ENCODE measurements at regions of chr20 and their contacts with region 1.

Region 1: DNA sequence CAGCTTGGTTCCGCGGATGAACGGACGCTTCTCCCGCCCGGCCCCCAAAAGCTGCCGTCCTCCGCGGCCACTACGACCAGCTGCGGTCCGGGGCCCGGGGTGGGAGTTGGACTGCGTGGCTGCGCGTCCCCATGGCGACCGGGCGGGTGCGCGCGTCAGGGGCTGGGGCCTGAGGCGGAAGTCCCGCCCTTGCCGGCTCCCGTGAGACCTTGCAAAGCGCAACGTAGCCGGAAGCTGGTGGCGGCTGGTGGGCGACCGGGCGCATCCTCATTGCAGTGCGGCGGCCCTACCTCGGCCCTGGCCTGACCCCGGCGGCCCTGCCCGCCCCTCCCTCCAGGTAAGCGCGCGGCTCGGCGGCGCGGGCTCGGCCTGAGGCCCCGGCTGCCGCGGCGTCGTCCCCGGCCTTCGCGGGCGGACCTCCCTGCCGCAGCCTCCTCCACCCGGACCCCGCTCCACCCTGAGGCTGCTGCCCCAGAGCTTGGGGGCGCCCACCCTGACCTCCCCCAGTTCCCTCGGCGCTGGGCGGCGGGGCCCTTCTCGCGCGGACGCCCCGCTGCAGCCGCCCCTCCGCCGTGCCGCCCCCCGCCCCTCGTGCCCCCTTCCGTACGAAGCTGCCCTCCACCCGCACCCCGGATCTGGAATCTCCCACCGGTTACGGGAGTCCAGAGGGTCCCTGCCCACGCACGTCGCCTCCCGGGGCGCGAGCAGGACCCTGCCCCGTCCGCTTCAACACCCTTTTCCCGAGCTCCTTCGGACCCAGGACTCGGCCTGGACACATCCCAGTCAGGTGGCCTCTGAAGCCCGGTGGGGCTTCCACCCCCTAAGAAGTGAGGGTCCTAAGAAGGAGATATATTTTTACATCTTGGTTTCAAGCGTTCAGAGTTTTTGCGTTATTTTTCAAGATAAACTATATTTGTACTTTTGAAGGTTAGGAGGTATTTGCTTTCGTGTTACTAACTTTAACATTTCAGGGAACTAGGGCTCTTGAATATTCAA is at the start of gene ARFGAP1:
- DNase-seq: peak; percentile 94
- ATAC-seq: peak; percentile 99
- H3K4me3 Mint-ChIP-seq: peak within 1 kb of the TSS; percentile 79
- H3K27ac Mint-ChIP-seq: peak within 1 kb of the TSS; percentile 83
- H3K4me1 Mint-ChIP-seq: peaks cover 27% of the 10 kb centered on the region
- H3K27me3 Mint-ChIP-seq: no peaks in the 10 kb centered on the region
- total RNA-seq, gene ARFGAP1: 73.4 to 77.6 TPM

Region 2: DNA sequence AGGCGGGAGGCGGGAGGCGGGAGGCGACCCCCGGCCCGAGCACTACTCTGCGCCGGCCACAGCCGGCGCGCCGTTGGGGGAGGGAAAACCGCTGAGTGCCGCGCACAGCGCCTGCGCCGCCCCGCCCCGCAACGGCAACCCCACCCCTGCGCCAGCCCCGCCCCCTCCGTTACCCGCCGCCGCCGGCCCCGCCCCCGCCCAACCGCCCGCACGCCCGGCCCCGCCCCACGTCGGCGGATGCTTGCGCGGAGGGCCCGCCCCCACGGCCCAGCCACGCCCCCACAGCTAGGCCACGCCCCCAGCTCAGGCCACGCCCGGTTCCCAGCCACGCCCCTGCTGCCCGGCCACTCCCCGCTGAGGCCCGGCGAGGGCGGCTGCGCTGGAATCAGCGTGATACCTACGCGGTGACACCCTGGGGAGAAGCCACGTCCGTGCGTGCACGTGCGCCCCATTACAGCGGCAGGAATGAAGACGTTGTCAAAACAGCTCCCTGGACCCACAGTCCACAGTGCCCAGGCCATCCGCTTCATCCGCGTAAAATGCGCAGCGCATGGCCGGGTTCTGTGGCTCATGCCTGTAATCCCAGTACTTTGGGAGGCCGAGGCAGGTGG is 411.1 kb before region 1 on chr20 and contains the start of gene TCFL5:
- CTCF ChIA-PET with region 1: no interaction called
- POLR2A ChIA-PET with region 1: no interaction called
- intact Hi-C with region 1: loop called in 1 of 2 experiments (anchors 2 kb)
- DNase-seq: peak; percentile 97
- ATAC-seq: peak; percentile 92
- H3K4me3 Mint-ChIP-seq: peak within 1 kb of the TSS; percentile 66
- H3K27ac Mint-ChIP-seq: peak within 1 kb of the TSS; percentile 42
- H3K4me1 Mint-ChIP-seq: peaks cover 28% of the 10 kb centered on the region
- H3K27me3 Mint-ChIP-seq: no peaks in the 10 kb centered on the region
- total RNA-seq, gene TCFL5: 5.2 to 6.6 TPM

Region 3: DNA sequence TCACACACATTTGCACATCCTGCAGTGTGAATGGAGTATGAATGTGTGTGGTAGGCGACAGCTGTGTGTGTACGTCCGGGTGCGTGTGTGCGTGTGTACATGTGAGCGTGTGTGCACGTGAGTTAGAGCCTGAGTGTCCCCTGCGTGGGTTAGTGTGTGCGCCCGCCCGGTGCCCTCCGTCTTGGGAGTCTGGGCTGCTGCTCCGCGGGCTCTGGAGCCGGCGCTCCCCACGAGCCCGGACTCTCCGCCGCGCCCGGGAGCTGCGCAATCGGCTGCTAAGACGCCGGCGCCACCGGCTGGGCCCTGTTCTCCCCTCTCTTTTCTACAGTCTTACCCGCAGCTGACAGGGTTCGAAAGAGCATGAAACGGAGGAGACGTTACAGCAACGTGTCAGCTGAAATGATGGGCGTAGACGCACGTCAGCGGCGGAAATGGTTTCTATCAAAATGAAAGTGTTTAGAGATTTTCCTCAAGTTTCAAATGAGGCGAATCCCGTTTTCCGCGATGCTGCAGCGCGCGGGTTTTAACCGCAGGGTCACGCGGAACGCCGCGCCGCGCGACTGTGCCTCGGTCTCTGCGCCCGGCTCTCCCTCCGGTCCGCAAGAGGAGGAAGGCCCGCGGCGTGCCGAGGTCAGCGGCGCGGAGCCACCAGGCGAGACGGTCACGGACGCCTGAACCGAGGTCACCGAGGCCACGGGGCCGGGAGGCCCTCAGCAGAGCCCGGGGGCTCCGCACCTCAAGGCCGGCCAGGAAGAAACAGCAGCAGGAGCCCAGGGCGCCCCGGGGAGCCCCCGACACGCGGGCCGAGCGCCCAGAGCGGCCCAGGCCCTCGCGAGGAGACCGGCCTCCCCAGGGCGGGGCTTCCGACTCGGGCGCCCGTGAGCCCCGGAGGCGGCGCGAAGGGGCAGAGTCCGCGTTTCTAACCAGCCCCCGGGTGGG is 170.8 kb before region 1 on chr20:
- CTCF ChIA-PET with region 1: no interaction called
- POLR2A ChIA-PET with region 1: no interaction called
- intact Hi-C with region 1: loop called in 1 of 2 experiments (anchors 2 kb)
- DNase-seq: peak; percentile 85
- ATAC-seq: peak; percentile 74
- H3K4me3 Mint-ChIP-seq: peak overlapping the region; percentile 77
- H3K27ac Mint-ChIP-seq: peak overlapping the region; percentile 87
- H3K4me1 Mint-ChIP-seq: peaks cover 5% of the 10 kb centered on the region
- H3K27me3 Mint-ChIP-seq: no peaks in the 10 kb centered on the region

Region 4: GRCh38 chr20:63223221-63224207 is 49.4 kb before region 1 on chr20:
- CTCF ChIA-PET with region 1: interaction called, 10 read pairs
- POLR2A ChIA-PET with region 1: no interaction called
- intact Hi-C with region 1: no loop called
- DNase-seq: peak; percentile 68
- ATAC-seq: peak; percentile 75
- H3K4me3 Mint-ChIP-seq: no peak overlapping the region
- H3K27ac Mint-ChIP-seq: no peak overlapping the region
- H3K4me1 Mint-ChIP-seq: no peaks in the 10 kb centered on the region
- H3K27me3 Mint-ChIP-seq: peaks cover 4% of the 10 kb centered on the region

Region 5: GRCh38 chr20:63394069-63394919 is 121.4 kb after region 1 on chr20:
- CTCF ChIA-PET with region 1: no interaction called
- POLR2A ChIA-PET with region 1: no interaction called
- intact Hi-C with region 1: no loop called
- DNase-seq: no peak
- ATAC-seq: no peak
- H3K4me3 Mint-ChIP-seq: no peak overlapping the region
- H3K27ac Mint-ChIP-seq: no peak overlapping the region
- H3K4me1 Mint-ChIP-seq: no peaks in the 10 kb centered on the region
- H3K27me3 Mint-ChIP-seq: no peaks in the 10 kb centered on the region

Region 6: GRCh38 chr20:63657937-63658748 is 385.3 kb after region 1 on chr20 and contains the start of gene RTEL1:
- CTCF ChIA-PET with region 1: no interaction called
- POLR2A ChIA-PET with region 1: no interaction called
- intact Hi-C with region 1: loop called in 1 of 2 experiments (anchors 1 kb)
- DNase-seq: peak; percentile 92
- ATAC-seq: peak; percentile 82
- H3K4me3 Mint-ChIP-seq: peak within 1 kb of the TSS; percentile 95
- H3K27ac Mint-ChIP-seq: peak within 1 kb of the TSS; percentile 94
- H3K4me1 Mint-ChIP-seq: peaks cover 30% of the 10 kb centered on the region
- H3K27me3 Mint-ChIP-seq: no peaks in the 10 kb centered on the region
- total RNA-seq, gene RTEL1: 44.5 to 44.7 TPM